AG04449 (cell line): ENCODE measurements at regions of chr2 and their contacts with region 1.

Region 1: DNA sequence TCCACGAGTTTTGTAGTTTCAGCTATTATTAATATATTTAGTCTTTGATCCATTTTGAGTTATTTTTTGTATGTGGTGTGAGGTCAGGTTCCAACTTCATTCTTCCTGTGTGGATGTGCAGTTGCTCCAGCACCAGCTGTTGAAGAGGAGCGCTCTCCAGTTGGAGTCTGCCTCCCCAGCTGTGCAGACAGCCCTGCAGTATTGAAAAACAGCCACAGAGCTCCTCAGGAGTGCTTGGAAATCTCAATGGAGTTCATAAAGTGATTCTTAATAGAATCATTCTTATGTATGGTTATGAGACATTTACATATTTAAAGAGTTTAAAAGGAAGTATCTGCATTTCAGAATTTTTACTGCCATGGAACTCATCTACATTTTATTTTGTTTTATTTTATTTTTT is 17.3 kb downstream of the DGKD start:
- DNase-seq: no peak
- H3K4me3 ChIP-seq: no peak overlapping the region
- CTCF ChIP-seq: no peak

Region 2: GRCh38 chr2:233353769-233354499 is 17.7 kb before region 1 on chr2 and contains the start of gene DGKD:
- CTCF ChIA-PET with region 1: interaction called, 22 read pairs
- POLR2A ChIA-PET with region 1: no interaction called
- DNase-seq: no peak
- H3K4me3 ChIP-seq: peak within 1 kb of the TSS; percentile 68
- CTCF ChIP-seq: peak; percentile 45